CD4-positive, alpha-beta T cell (primary cell): ENCODE measurements at regions of chr20 and their contacts with region 1.

Region 1: GRCh38 chr20:36613974-36614373 is 8.4 kb downstream of the RAB5IF start:
- DNase-seq: no peak
- ATAC-seq: no peak
- H3K4me3 ChIP-seq: no peak overlapping the region
- H3K4me3 Mint-ChIP-seq: no peak overlapping the region
- H3K27ac ChIP-seq: peak overlapping the region in 1 of 2 donors; percentile 29
- H3K27ac Mint-ChIP-seq: peak overlapping the region; percentile 22
- H3K4me1 ChIP-seq: peaks cover 13% of the 10 kb centered on the region
- H3K4me1 Mint-ChIP-seq: peaks cover 12% of the 10 kb centered on the region
- H3K27me3 ChIP-seq: no peaks in the 10 kb centered on the region
- H3K27me3 Mint-ChIP-seq: no peaks in the 10 kb centered on the region
- CTCF ChIP-seq: no peak

Region 2: GRCh38 chr20:36658300-36658699 is 44.3 kb after region 1 on chr20:
- CTCF ChIA-PET with region 1: no interaction called
- POLR2A ChIA-PET with region 1: no interaction called
- intact Hi-C with region 1: loop called in 1 of 2 experiments (anchors 1 kb)
- DNase-seq: peak in 3 of 14 experiments; percentile 49 to 72 (median 55)
- ATAC-seq: peak; percentile 68
- H3K4me3 ChIP-seq: peak overlapping the region; percentile 6
- H3K4me3 Mint-ChIP-seq: peak overlapping the region; percentile 42
- H3K27ac ChIP-seq: no peak overlapping the region
- H3K27ac Mint-ChIP-seq: peak overlapping the region; percentile 19
- H3K4me1 ChIP-seq: peaks cover 13% of the 10 kb centered on the region
- H3K4me1 Mint-ChIP-seq: peaks cover 22% of the 10 kb centered on the region
- H3K27me3 ChIP-seq: no peaks in the 10 kb centered on the region
- H3K27me3 Mint-ChIP-seq: no peaks in the 10 kb centered on the region
- CTCF ChIP-seq: no peak

Region 3: GRCh38 chr20:36861875-36862801 is 248.2 kb after region 1 on chr20:
- CTCF ChIA-PET with region 1: no interaction called
- POLR2A ChIA-PET with region 1: no interaction called
- intact Hi-C with region 1: loop called in 1 of 2 experiments (anchors 5 kb)
- DNase-seq: no peak
- ATAC-seq: no peak
- H3K4me3 ChIP-seq: no peak overlapping the region
- H3K4me3 Mint-ChIP-seq: peak overlapping the region; percentile 79
- H3K27ac ChIP-seq: no peak overlapping the region
- H3K27ac Mint-ChIP-seq: no peak overlapping the region
- H3K4me1 ChIP-seq: peaks cover 10% of the 10 kb centered on the region
- H3K4me1 Mint-ChIP-seq: peaks cover 9% of the 10 kb centered on the region
- H3K27me3 ChIP-seq: peaks cover 14 to 20% of the 10 kb centered on the region in 2 experiments
- H3K27me3 Mint-ChIP-seq: peaks cover 39% of the 10 kb centered on the region
- CTCF ChIP-seq: no peak

Region 4: GRCh38 chr20:36895036-36895435 is 281.1 kb after region 1 on chr20:
- CTCF ChIA-PET with region 1: no interaction called
- POLR2A ChIA-PET with region 1: no interaction called
- intact Hi-C with region 1: no loop called
- DNase-seq: no peak
- ATAC-seq: peak; percentile 47
- H3K4me3 ChIP-seq: no peak overlapping the region
- H3K4me3 Mint-ChIP-seq: no peak overlapping the region
- H3K27ac ChIP-seq: no peak overlapping the region
- H3K27ac Mint-ChIP-seq: peak overlapping the region; percentile 62
- H3K4me1 ChIP-seq: no peaks in the 10 kb centered on the region
- H3K4me1 Mint-ChIP-seq: peaks cover 16% of the 10 kb centered on the region
- H3K27me3 ChIP-seq: no peaks in the 10 kb centered on the region
- H3K27me3 Mint-ChIP-seq: no peaks in the 10 kb centered on the region
- CTCF ChIP-seq: no peak